ENCODE measurements at regions of chr19 and their contacts with region 1.

Region 1: GRCh38 chr19:36652958-36653357 is 13.7 kb downstream of the ZNF461 start:
- DNase-seq: no peak
- ATAC-seq: no peak
- H3K4me3 ChIP-seq: no peak overlapping the region
- H3K27ac ChIP-seq: no peak overlapping the region
- H3K4me1 ChIP-seq: no peaks in the 10 kb centered on the region
- CTCF ChIP-seq: no peak
- EP300 ChIP-seq: no peak
- POLR2A ChIP-seq: no peak
- RAD21 ChIP-seq: no peak

Region 2: DNA sequence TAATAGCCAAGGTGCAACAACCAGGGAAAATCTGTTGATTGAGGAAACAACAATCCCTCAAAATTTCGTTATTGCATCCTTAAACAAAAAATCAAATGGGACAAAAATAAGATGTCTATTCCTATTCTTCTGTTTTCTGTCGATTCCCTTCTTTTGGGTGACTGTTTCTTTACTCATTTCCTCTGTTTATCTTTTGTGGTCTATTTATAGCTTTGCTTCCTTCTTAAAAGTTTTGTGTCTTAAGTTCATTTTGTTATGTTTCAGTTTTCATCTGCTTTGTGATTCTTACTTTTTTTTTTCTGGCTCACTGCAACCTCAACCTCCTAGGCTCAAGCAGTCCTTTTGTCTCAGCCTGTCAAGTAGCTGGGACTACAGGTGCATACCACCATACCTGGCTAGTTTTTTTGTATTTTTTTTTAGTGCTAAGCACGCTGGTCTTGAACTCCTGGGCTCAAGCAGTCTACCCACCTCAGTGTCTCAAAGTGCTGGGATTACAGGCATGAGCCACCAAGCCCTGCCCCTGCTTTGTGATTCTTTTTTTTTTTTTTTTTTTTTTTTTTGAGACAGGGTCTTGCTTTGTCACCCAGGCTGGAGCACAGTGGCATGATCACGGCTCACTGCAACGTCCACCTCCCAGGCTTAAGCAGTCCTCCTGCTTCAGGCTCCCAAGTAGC is 427.6 kb before region 1 on chr19:
- CTCF ChIA-PET with region 1: no interaction called
- POLR2A ChIA-PET with region 1: interaction called, 14 read pairs
- DNase-seq: no peak
- ATAC-seq: no peak
- H3K4me3 ChIP-seq: no peak overlapping the region
- H3K27ac ChIP-seq: no peak overlapping the region
- H3K4me1 ChIP-seq: no peaks in the 10 kb centered on the region
- CTCF ChIP-seq: no peak
- EP300 ChIP-seq: no peak
- POLR2A ChIP-seq: no peak
- RAD21 ChIP-seq: no peak

Measured in A549 (cell line).